ENCODE measurements at regions of chr1 and their contacts with region 1.

Region 1: GRCh38 chr1:71908303-71908702 is 374.0 kb downstream of the NEGR1 start:
- DNase-seq: no peak
- H3K4me3 Mint-ChIP-seq: no peak overlapping the region
- H3K27ac Mint-ChIP-seq: no peak overlapping the region
- H3K4me1 Mint-ChIP-seq: no peaks in the 10 kb centered on the region
- H3K27me3 Mint-ChIP-seq: no peaks in the 10 kb centered on the region

Region 2: DNA sequence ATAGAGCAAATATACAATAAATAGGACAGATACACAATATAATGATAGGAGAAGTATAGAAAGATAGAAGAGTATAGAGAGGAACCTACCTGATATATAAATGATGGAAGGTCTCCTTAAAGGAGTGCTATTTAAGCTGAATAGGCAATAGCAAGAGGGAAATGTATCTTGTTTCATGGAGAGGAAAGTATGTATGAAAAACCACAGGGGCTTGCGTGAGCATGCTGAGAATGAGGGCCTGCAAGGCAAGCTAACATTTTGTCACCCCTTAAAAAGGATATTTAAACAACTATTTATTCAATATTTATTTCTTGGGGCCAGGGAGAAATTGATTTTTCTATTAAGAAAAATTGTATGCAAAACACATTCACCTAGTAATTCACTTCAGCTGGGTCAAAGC is 676.6 kb before region 1 on chr1:
- CTCF ChIA-PET with region 1: no interaction called
- POLR2A ChIA-PET with region 1: no interaction called
- intact Hi-C with region 1: loop called (anchors 5 kb)
- DNase-seq: no peak
- H3K4me3 Mint-ChIP-seq: no peak overlapping the region
- H3K27ac Mint-ChIP-seq: no peak overlapping the region
- H3K4me1 Mint-ChIP-seq: no peaks in the 10 kb centered on the region
- H3K27me3 Mint-ChIP-seq: no peaks in the 10 kb centered on the region

Measured in activated CD4-positive, alpha-beta memory T cell treated with anti-CD3 and anti-CD28 coated beads for 36 hours (primary cell).